ENCODE measurements at regions of chr9 and their contacts with region 1.

Region 1: GRCh38 chr9:84170521-84171141 is 169.9 kb downstream of the SLC28A3 start:
- DNase-seq: peak; percentile 53
- H3K4me3 ChIP-seq: no peak overlapping the region
- H3K27ac ChIP-seq: no peak overlapping the region
- H3K4me1 ChIP-seq: no peaks in the 10 kb centered on the region
- H3K27me3 ChIP-seq: no peaks in the 10 kb centered on the region
- CTCF ChIP-seq: no peak

Region 2: GRCh38 chr9:83937911-83938323 is 232.7 kb before region 1 on chr9:
- intact Hi-C with region 1: loop called (anchors 10 kb)
- DNase-seq: no peak
- H3K4me3 ChIP-seq: no peak overlapping the region
- H3K27ac ChIP-seq: no peak overlapping the region
- H3K4me1 ChIP-seq: no peaks in the 10 kb centered on the region
- H3K27me3 ChIP-seq: no peaks in the 10 kb centered on the region
- CTCF ChIP-seq: peak; percentile 45

Region 3: GRCh38 chr9:84244850-84245249 is 74.2 kb after region 1 on chr9:
- intact Hi-C with region 1: no loop called
- DNase-seq: no peak
- H3K4me3 ChIP-seq: no peak overlapping the region
- H3K27ac ChIP-seq: no peak overlapping the region
- H3K4me1 ChIP-seq: no peaks in the 10 kb centered on the region
- H3K27me3 ChIP-seq: no peaks in the 10 kb centered on the region
- CTCF ChIP-seq: no peak

Measured in colonic mucosa (tissue), 4 donors.